Sciatic nerve (tissue), 2 donors: ENCODE measurements at regions of chr4 and their contacts with region 1.

Region 1: DNA sequence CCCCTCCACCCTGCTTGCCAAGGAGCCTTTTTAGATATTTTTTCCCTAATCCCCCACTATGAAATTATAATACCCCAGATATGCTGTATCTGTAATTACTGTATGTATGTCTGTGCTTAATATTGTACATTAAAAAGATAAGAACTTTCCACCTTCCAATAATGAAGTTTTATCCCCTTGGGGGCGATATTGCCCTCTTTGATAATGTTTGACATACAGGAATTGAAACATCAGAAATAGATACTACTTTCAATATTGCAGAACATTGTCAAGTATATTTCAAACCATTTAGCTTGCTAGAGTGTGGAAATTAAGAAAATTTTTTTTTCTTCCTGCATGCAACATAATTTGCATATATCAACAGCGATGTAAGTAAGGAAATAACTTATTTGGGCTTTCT is 58.9 kb downstream of the NAF1 start:
- DNase-seq: no peak
- ATAC-seq: no peak

Region 2: GRCh38 chr4:163085085-163085484 is 22.7 kb before region 1 on chr4:
- intact Hi-C with region 1: loop called (anchors 2 kb)
- DNase-seq: no peak
- ATAC-seq: peak; percentile 13